CD8-positive, alpha-beta T cell (primary cell): ENCODE measurements at regions of chr6 and their contacts with region 1.

Region 1: DNA sequence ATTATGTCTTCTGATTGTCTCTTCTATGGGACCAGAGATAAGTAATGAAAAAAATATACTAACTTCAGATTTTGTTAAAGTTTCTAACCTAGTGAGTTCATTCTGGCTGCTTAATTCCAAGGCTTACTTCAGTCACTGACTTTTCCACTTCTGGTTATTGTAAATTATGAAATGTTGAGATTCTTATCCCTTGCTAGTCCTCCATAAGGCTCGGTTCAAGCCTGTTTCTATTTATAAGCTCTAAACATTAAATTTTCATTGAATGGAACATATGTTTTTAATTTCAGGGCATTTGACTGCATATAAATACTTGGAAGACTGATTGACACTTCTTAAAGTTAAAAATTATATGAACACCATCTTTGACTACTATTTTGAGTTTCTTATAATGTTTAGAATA is 23.6 kb upstream of the NKAIN2 start:
- DNase-seq: no peak
- ATAC-seq: no peak
- H3K4me3 ChIP-seq: no peak overlapping the region
- H3K4me3 Mint-ChIP-seq: no peak overlapping the region
- H3K27ac ChIP-seq: no peak overlapping the region
- H3K27ac Mint-ChIP-seq: no peak overlapping the region
- H3K4me1 ChIP-seq: no peaks in the 10 kb centered on the region
- H3K4me1 Mint-ChIP-seq: no peaks in the 10 kb centered on the region
- H3K27me3 ChIP-seq: no peaks in the 10 kb centered on the region
- H3K27me3 Mint-ChIP-seq: no peaks in the 10 kb centered on the region
- CTCF ChIP-seq: no peak

Region 2: GRCh38 chr6:125251516-125252220 is 1471.6 kb after region 1 on chr6:
- CTCF ChIA-PET with region 1: no interaction called
- POLR2A ChIA-PET with region 1: no interaction called
- intact Hi-C with region 1: loop called in 1 of 2 experiments (anchors 5 kb)
- DNase-seq: no peak
- ATAC-seq: no peak
- H3K4me3 ChIP-seq: no peak overlapping the region
- H3K4me3 Mint-ChIP-seq: no peak overlapping the region
- H3K27ac ChIP-seq: no peak overlapping the region
- H3K27ac Mint-ChIP-seq: no peak overlapping the region
- H3K4me1 ChIP-seq: no peaks in the 10 kb centered on the region
- H3K4me1 Mint-ChIP-seq: no peaks in the 10 kb centered on the region
- H3K27me3 ChIP-seq: no peaks in the 10 kb centered on the region
- H3K27me3 Mint-ChIP-seq: peaks cover 7% of the 10 kb centered on the region
- CTCF ChIP-seq: no peak